Pancreas (tissue), 10 donors: ENCODE measurements at regions of chr18 and their contacts with region 1.

Region 1: DNA sequence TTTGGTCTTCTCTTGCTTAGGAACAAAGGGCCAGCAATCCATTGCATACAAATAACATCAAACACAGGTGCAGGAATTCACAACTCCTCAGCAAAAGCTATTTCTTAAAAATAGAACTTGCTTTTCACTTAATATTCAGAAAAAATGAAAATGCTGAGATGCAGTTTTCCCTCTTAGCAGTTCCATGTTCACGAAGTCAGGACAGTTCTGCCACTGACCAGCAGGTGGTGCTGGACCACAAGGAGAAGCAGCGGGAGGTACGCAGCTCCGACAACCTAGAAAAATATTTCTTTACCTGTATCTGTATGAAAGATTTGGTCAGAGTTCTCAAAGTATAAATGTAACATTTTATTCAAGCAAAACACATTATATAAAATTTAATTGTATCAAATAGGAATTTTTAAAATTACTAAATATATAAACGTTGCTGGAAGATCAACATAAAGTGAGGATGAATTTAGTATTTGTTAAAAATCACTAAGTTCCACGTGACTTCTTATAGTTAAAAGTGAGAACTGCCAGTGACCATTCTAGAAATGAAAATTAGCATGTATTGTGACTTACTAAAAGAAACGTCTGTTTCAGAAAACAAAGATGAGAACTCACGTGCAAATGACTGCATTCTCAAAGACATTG is 48.8 kb downstream of the ADNP2 start:
- DNase-seq: peak in 5 of 6 donors; percentile 56 to 92 (median 81)
- ATAC-seq: peak; percentile 72 to 90 (median 88)
- H3K4me3 ChIP-seq: no peak overlapping the region
- H3K27ac ChIP-seq: no peak overlapping the region
- H3K4me1 ChIP-seq: no peaks in the 10 kb centered on the region
- H3K27me3 ChIP-seq: no peaks in the 10 kb centered on the region
- CTCF ChIP-seq: peak; percentile 81 to 97 (median 95)

Region 2: GRCh38 chr18:79933765-79934164 is 224.1 kb before region 1 on chr18:
- intact Hi-C with region 1: loop called in 1 of 3 experiments (anchors 10 kb)
- DNase-seq: peak; percentile 68 to 76 (median 70)
- ATAC-seq: peak; percentile 92 to 97 (median 94)
- H3K4me3 ChIP-seq: no peak overlapping the region
- H3K27ac ChIP-seq: peak overlapping the region in 1 of 4 donors; percentile 25
- H3K4me1 ChIP-seq: peaks cover 0 to 13% (median 12%) of the 10 kb centered on the region in 3 donors
- H3K27me3 ChIP-seq: no peaks in the 10 kb centered on the region
- CTCF ChIP-seq: peak in 3 of 4 donors; percentile 23 to 41 (median 36)

Region 3: DNA sequence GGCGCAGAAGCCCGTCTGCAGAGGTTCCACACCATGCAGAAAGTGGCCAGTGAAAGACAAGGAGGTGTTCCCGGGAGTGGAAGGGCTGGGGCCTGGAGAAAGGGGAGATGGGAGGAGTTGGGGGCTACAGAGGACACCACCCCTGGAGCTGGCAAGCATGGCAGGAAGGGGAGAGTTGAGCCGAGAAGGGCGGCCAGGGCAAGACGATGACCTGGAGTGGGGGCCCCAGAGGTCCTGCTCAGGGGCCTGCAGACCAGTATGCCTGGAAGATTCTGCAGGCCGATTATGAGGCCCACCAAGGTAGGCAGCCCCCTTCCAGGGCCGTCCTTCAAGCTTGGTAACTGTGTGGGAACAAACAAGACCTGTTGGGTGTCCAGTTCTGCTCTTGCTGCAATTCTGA is 90.5 kb before region 1 on chr18:
- intact Hi-C with region 1: no loop called
- DNase-seq: no peak
- ATAC-seq: no peak
- H3K4me3 ChIP-seq: no peak overlapping the region
- H3K27ac ChIP-seq: no peak overlapping the region
- H3K4me1 ChIP-seq: no peaks in the 10 kb centered on the region
- H3K27me3 ChIP-seq: no peaks in the 10 kb centered on the region
- CTCF ChIP-seq: no peak